Activated CD4-positive, alpha-beta T cell treated with anti-CD3 and anti-CD28 coated beads, Interleukin-2, amount 10 ng/mL, durations not matched to agents 24 days and 14 days (primary cell): ENCODE measurements at regions of chr11 and their contacts with region 1.

Region 1: GRCh38 chr11:34051349-34052035 is at the start of gene CAPRIN1:
- DNase-seq: peak; percentile 95
- H3K4me3 Mint-ChIP-seq: peak within 1 kb of the TSS; percentile 100
- H3K27ac Mint-ChIP-seq: peak within 1 kb of the TSS; percentile 99
- H3K4me1 Mint-ChIP-seq: peaks cover 14% of the 10 kb centered on the region
- H3K27me3 Mint-ChIP-seq: peaks cover 5% of the 10 kb centered on the region
- total RNA-seq, gene CAPRIN1: 318 and 321 TPM in 2 replicates

Region 2: GRCh38 chr11:33996498-33997454 is 54.7 kb before region 1 on chr11:
- intact Hi-C with region 1: loop called (anchors 2 kb)
- DNase-seq: peak; percentile 93
- H3K4me3 Mint-ChIP-seq: peak overlapping the region; percentile 30
- H3K27ac Mint-ChIP-seq: no peak overlapping the region
- H3K4me1 Mint-ChIP-seq: peaks cover 8% of the 10 kb centered on the region
- H3K27me3 Mint-ChIP-seq: peaks cover 29% of the 10 kb centered on the region

Region 3: DNA sequence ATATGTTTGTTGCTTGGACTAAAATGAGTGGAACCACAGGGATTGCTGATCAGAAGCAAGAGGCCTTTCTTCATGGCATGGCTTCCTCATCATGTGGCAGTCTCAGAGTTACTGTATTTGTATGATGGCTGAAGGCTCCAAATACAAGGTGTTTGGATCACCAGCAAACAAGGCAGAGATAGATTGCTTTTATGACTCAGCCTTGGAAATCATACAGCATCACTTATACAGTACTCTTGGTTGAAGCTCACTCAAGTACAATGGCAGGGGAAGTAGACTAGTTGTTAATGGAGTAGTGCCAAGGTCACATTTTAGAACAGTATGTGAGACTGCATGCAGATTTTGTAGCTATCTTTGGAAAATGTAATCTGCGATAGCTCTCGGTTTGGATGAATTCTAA is 16.6 kb after region 1 on chr11:
- intact Hi-C with region 1: loop called (anchors 2 kb)
- DNase-seq: no peak
- H3K4me3 Mint-ChIP-seq: no peak overlapping the region
- H3K27ac Mint-ChIP-seq: no peak overlapping the region
- H3K4me1 Mint-ChIP-seq: peaks cover 42% of the 10 kb centered on the region
- H3K27me3 Mint-ChIP-seq: no peaks in the 10 kb centered on the region

Region 4: GRCh38 chr11:34105079-34105956 is 53.8 kb after region 1 on chr11 and contains the start of gene NAT10:
- intact Hi-C with region 1: loop called (anchors 1 kb)
- DNase-seq: peak; percentile 99
- H3K4me3 Mint-ChIP-seq: peak within 1 kb of the TSS; percentile 97
- H3K27ac Mint-ChIP-seq: peak within 1 kb of the TSS; percentile 90
- H3K4me1 Mint-ChIP-seq: peaks cover 47% of the 10 kb centered on the region
- H3K27me3 Mint-ChIP-seq: peaks cover 3% of the 10 kb centered on the region
- total RNA-seq, gene NAT10: 162 and 169 TPM in 2 replicates

Region 5: GRCh38 chr11:34250732-34251639 is 199.5 kb after region 1 on chr11:
- intact Hi-C with region 1: loop called (anchors 1 kb)
- DNase-seq: peak; percentile 86
- H3K4me3 Mint-ChIP-seq: peak overlapping the region; percentile 56
- H3K27ac Mint-ChIP-seq: peak overlapping the region; percentile 49
- H3K4me1 Mint-ChIP-seq: peaks cover 63% of the 10 kb centered on the region
- H3K27me3 Mint-ChIP-seq: peaks cover 16% of the 10 kb centered on the region

Region 6: DNA sequence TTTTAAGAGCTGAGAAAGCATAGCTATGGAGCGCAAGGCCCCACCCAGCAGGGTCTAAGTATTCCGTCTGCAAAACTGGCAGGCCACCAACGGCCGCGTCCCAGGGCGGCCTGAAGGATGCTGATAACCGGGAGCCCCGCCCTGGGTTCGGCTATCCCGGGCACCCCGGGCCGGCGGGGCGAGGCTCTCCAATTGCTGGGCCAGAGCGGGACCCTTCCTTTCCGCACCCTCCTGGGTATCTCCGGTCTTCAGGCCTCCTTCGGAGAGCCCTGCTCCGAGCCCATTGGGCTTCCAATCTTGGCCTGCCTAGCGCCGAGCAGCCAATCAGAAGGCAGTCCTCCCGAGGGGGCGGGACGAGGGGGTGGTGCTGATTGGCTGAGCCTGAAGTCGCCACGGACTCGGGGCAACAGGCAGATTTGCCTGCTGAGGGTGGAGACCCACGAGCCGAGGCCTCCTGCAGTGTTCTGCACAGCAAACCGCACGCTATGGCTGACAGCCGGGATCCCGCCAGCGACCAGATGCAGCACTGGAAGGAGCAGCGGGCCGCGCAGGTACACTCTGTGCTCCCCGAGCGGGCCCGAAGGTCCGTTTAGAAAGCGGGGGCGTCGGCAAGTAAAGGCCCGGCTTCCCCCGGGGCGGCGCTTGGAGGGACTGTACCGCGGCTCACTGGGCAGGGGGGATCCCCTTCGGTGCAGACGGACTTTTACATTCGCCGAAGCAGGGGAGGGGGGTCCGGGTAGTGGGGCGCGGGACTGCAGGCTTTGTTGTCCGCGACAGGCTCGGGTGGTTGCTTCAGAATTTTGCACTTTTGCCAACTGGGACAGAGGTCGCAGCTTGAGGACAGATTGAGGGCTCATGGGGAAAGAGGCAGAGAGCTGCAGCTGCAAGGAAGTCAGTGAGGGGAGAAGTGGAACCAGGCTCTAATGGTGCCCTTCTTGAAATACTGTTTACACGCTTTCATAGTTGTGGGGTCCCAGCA is 387.3 kb after region 1 on chr11 and contains the start of gene CAT:
- intact Hi-C with region 1: loop called (anchors 2 kb)
- DNase-seq: peak; percentile 99
- H3K4me3 Mint-ChIP-seq: peak within 1 kb of the TSS; percentile 95
- H3K27ac Mint-ChIP-seq: peak within 1 kb of the TSS; percentile 90
- H3K4me1 Mint-ChIP-seq: peaks cover 17% of the 10 kb centered on the region
- H3K27me3 Mint-ChIP-seq: no peaks in the 10 kb centered on the region
- total RNA-seq, gene CAT: 17.4 and 19.0 TPM in 2 replicates

Region 7: DNA sequence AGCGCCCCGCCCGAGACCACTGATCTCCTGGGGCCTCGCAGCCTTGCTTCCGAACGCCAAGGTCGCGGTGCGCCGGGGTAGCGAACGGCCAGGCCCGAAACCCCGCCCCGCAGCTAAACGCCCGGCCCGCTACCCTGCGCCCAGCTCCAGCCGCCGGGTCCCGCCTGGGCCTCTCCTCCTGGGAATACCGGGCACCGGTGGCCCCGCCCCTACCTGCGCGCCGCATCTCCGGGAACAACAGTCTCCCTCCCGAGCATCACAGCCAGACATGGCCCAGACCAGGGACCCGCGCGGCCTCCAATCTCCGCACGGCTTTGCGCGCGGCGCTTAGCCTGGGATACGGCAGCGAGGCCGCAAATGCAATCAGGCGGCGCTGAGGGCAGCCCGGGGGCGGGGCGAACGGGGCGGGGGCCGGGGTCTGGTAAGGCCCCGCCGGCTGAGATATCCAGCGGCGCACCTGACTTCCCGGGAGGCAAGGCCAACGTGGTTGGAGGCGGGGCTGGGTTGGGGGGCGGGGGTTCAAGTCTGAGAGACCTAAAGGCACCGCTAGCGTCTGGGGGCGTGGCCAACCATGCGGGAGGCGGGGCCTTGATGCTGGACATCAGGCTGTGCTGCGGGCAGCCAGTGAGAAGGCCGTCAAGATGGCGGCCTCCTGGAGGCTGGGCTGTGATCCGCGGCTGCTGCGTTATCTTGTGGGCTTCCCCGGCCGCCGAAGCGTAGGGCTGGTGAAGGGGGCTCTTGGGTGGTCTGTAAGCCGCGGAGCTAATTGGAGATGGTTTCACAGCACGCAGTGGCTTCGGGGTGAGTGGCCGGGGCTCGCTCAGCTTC is 864.7 kb after region 1 on chr11 and contains the starts of genes APIP and PDHX:
- intact Hi-C with region 1: loop called (anchors 5 kb)
- DNase-seq: peak; percentile 98
- H3K4me3 Mint-ChIP-seq: peak within 1 kb of the TSS; percentile 98
- H3K27ac Mint-ChIP-seq: peak within 1 kb of the TSS; percentile 95
- H3K4me1 Mint-ChIP-seq: peaks cover 25% of the 10 kb centered on the region
- H3K27me3 Mint-ChIP-seq: no peaks in the 10 kb centered on the region
- total RNA-seq, gene APIP: 26.8 and 29.6 TPM in 2 replicates
- total RNA-seq, gene PDHX: 31.0 and 35.7 TPM in 2 replicates